IMR-90 (cell line): ENCODE measurements at regions of chr5 and their contacts with region 1.

Region 1: GRCh38 chr5:173396311-173396993 is 68.2 kb upstream of the STC2 start:
- DNase-seq: no peak
- ATAC-seq: no peak
- H3K4me3 ChIP-seq: no peak overlapping the region
- H3K27ac ChIP-seq: 0 out of 2 replicates have a peak overlapping the region, but pooled peaks have one; percentile 7
- H3K4me1 ChIP-seq: peaks cover 13% of the 10 kb centered on the region
- H3K27me3 ChIP-seq: no peaks in the 10 kb centered on the region
- CTCF ChIP-seq: no peak
- POLR2A ChIP-seq: no peak
- RAD21 ChIP-seq: no peak

Region 2: GRCh38 chr5:173293817-173294672 is 102.4 kb before region 1 on chr5:
- CTCF ChIA-PET with region 1: no interaction called
- POLR2A ChIA-PET with region 1: no interaction called
- dilution Hi-C with region 1: no loop called
- in situ Hi-C with region 1: no loop called
- intact Hi-C with region 1: loop called (anchors 1 kb)
- DNase-seq: peak; percentile 80
- ATAC-seq: peak; percentile 84
- H3K4me3 ChIP-seq: no peak overlapping the region
- H3K27ac ChIP-seq: peak overlapping the region; percentile 29
- H3K4me1 ChIP-seq: peaks cover 17% of the 10 kb centered on the region
- H3K27me3 ChIP-seq: no peaks in the 10 kb centered on the region; the same call in 1 of the 2 replicates
- CTCF ChIP-seq: peak; percentile 96
- POLR2A ChIP-seq: peak; percentile 55; the same call in 1 of the 2 replicates
- RAD21 ChIP-seq: peak; percentile 96

Region 3: GRCh38 chr5:173451031-173451430 is 54.6 kb after region 1 on chr5:
- CTCF ChIA-PET with region 1: interaction called, 4 read pairs
- POLR2A ChIA-PET with region 1: no interaction called
- dilution Hi-C with region 1: no loop called
- in situ Hi-C with region 1: no loop called
- intact Hi-C with region 1: loop called (anchors 5 kb)
- DNase-seq: peak; percentile 28
- ATAC-seq: no peak
- H3K4me3 ChIP-seq: no peak overlapping the region
- H3K27ac ChIP-seq: peak overlapping the region; percentile 69
- H3K4me1 ChIP-seq: peaks cover 30% of the 10 kb centered on the region
- H3K27me3 ChIP-seq: no peaks in the 10 kb centered on the region
- CTCF ChIP-seq: peak; percentile 27; the same call in 1 of the 2 replicates
- POLR2A ChIP-seq: no peak
- RAD21 ChIP-seq: no peak; the same call in 1 of the 2 replicates